ENCODE measurements at regions of chr22 and their contacts with region 1.

Region 1: GRCh38 chr22:35313311-35314121 is 13.8 kb downstream of the TOM1 start:
- DNase-seq: peak in 2 of 14 experiments; percentile 27 to 29
- ATAC-seq: peak; percentile 17
- H3K4me3 ChIP-seq: no peak overlapping the region
- H3K4me3 Mint-ChIP-seq: no peak overlapping the region
- H3K27ac ChIP-seq: no peak overlapping the region
- H3K27ac Mint-ChIP-seq: no peak overlapping the region
- H3K4me1 ChIP-seq: peaks cover 75% of the 10 kb centered on the region
- H3K4me1 Mint-ChIP-seq: peaks cover 67% of the 10 kb centered on the region
- H3K27me3 ChIP-seq: no peaks in the 10 kb centered on the region
- H3K27me3 Mint-ChIP-seq: no peaks in the 10 kb centered on the region
- CTCF ChIP-seq: no peak

Region 2: DNA sequence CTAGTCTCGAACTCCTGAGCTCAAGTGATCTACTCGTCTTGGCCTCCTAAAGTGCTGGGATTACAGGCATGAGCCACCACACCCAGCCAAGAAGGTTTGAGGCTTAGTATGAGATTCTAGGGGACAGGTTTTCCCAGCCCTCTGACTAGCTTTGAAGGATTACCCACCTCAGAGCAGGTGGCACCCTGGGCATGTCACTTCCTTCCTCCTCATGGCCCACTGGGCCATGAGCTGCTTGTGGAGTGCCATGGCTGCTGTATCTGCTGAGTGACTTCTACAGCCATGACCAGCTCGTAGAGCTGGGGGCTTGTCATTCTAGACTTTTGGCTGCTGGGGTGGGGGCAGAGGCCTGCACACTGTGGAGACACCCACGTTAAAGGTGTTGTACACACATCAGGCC is 11.2 kb after region 1 on chr22:
- CTCF ChIA-PET with region 1: no interaction called
- POLR2A ChIA-PET with region 1: interaction called, 12 read pairs
- intact Hi-C with region 1: loop called in 1 of 2 experiments (anchors 2 kb)
- DNase-seq: no peak
- ATAC-seq: no peak
- H3K4me3 ChIP-seq: no peak overlapping the region
- H3K4me3 Mint-ChIP-seq: no peak overlapping the region
- H3K27ac ChIP-seq: no peak overlapping the region
- H3K27ac Mint-ChIP-seq: no peak overlapping the region
- H3K4me1 ChIP-seq: peaks cover 18% of the 10 kb centered on the region
- H3K4me1 Mint-ChIP-seq: peaks cover 14% of the 10 kb centered on the region
- H3K27me3 ChIP-seq: no peaks in the 10 kb centered on the region
- H3K27me3 Mint-ChIP-seq: no peaks in the 10 kb centered on the region
- CTCF ChIP-seq: no peak

Region 3: GRCh38 chr22:35330258-35330861 is 16.8 kb after region 1 on chr22:
- CTCF ChIA-PET with region 1: interaction called, 4 read pairs
- POLR2A ChIA-PET with region 1: interaction called, 12 read pairs
- intact Hi-C with region 1: loop called in 1 of 2 experiments (anchors 2 kb)
- DNase-seq: peak; percentile 23 to 83 (median 52)
- ATAC-seq: peak; percentile 71
- H3K4me3 ChIP-seq: no peak overlapping the region
- H3K4me3 Mint-ChIP-seq: peak overlapping the region; percentile 69
- H3K27ac ChIP-seq: peak overlapping the region in 1 of 2 donors; percentile 64
- H3K27ac Mint-ChIP-seq: peak overlapping the region; percentile 86
- H3K4me1 ChIP-seq: peaks cover 55% of the 10 kb centered on the region
- H3K4me1 Mint-ChIP-seq: peaks cover 34% of the 10 kb centered on the region
- H3K27me3 ChIP-seq: no peaks in the 10 kb centered on the region
- H3K27me3 Mint-ChIP-seq: no peaks in the 10 kb centered on the region
- CTCF ChIP-seq: no peak

Region 4: DNA sequence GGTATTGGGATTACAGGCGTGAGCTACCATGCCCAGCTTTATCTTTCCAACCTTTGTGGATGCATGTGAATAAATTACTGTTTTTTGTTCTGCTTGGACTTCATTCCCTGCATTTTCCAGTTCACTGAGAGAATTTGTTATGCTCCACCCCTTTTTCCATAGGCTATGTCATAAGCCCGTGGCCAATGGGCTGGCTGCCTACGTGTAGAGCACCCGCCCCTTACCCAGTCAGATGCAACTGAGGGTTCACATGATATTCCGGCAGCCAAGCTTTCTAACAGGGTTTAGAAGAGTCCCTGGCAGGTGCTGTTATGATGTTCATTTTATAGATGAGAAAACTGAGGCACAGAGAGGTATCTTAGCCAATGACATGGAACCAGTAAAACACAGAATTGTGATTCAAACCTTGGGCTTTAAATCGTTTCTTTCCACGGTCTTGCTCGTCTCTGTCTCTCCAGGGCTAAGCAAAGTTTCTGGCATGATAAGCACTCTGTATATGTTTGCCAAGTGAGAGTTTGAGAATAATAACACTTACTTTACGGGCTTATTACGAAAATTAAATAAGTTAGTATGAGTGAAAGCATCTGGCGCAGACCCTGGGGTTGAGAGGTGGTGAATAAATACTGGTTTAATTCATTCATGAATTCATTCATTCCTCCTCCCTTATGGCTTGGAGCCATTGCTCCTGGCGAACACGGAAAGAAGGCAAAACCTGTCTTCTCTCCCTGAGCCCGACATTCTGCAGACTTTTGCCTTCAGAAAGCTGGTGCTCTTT is 184.7 kb after region 1 on chr22:
- CTCF ChIA-PET with region 1: no interaction called
- POLR2A ChIA-PET with region 1: no interaction called
- intact Hi-C with region 1: no loop called
- DNase-seq: no peak
- ATAC-seq: no peak
- H3K4me3 ChIP-seq: no peak overlapping the region
- H3K4me3 Mint-ChIP-seq: no peak overlapping the region
- H3K27ac ChIP-seq: no peak overlapping the region
- H3K27ac Mint-ChIP-seq: no peak overlapping the region
- H3K4me1 ChIP-seq: no peaks in the 10 kb centered on the region
- H3K4me1 Mint-ChIP-seq: no peaks in the 10 kb centered on the region
- H3K27me3 ChIP-seq: peaks cover 5 to 9% of the 10 kb centered on the region in 2 experiments
- H3K27me3 Mint-ChIP-seq: peaks cover 58% of the 10 kb centered on the region
- CTCF ChIP-seq: no peak